Stomach (tissue), 19 donors: ENCODE measurements at regions of chr6 and their contacts with region 1.

Region 1: GRCh38 chr6:29834564-29835436 is 7.2 kb downstream of the HLA-G start:
- DNase-seq: peak; percentile 14 to 38
- H3K4me3 ChIP-seq: no peak overlapping the region
- H3K27ac ChIP-seq: no peak overlapping the region
- H3K4me1 ChIP-seq: peaks cover 0 to 5% (median 0%) of the 10 kb centered on the region in 4 donors
- H3K27me3 ChIP-seq: peaks cover 0 to 78% (median 19%) of the 10 kb centered on the region in 3 donors
- CTCF ChIP-seq: peak in 5 of 7 experiments; percentile 33 to 87 (median 72)
- EP300 ChIP-seq: no peak
- POLR2A ChIP-seq: no peak

Region 2: DNA sequence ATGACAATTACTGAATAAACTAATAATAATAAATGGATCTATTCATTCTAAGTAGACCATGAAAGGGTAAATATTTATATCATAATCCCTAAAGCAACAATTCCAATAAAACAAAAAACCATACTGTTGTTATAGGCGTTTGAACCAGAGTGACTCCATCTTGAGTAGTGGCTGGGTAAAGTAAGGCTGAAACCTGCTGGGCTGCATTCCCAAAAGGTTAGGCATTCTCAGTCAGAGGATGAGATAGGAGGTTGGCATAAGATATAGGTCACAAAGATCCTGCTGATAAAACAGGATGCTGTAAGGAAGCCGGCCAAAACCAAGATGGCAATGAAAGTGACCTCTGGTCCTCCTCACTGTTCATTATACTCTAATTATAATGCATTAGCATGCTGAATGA is 369.5 kb before region 1 on chr6:
- intact Hi-C with region 1: no loop called
- DNase-seq: no peak
- H3K4me3 ChIP-seq: no peak overlapping the region
- H3K27ac ChIP-seq: no peak overlapping the region
- H3K4me1 ChIP-seq: no peaks in the 10 kb centered on the region
- H3K27me3 ChIP-seq: peaks cover 0 to 3% (median 0%) of the 10 kb centered on the region in 3 donors
- CTCF ChIP-seq: no peak
- EP300 ChIP-seq: no peak
- POLR2A ChIP-seq: no peak

Region 3: DNA sequence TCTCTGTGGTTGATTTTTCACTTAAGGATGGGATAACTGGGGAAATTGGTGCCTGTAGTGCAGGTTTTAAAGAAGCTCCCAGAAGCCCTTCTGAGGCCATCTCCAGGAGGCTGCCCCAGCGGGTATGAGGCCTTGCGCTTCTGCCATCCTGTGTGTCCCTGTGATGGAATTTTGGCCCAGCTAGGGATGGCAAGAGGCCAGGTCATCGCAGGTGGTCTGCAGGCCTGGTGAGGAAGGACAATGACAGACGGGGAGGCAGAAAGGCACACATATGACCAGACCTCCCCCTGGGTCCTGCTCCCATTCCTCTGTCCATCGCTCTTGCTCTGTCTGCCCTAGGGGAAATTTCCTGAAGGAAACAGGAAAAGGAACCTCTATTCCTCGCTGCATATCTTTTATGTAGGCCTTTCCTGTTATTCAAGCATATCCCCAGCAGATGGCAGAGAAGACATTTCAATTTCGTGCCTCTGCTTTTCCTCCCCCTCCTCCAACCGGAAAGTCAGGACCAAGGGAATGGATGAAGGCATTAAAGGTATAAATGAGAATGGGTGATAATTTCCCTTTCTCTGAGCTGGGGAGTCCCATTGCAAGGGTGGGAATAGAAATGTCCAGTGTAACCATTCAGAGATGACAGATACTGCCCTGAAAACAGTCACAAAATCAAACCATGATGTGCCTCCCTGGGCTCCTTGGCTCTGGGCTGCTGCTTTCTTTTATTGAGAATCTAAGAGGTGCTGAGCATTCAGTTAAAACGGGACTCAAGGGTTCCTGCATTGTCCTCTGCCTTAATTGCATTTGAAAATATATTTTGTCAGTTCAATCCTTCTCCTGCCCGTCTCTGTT is 129.2 kb before region 1 on chr6:
- intact Hi-C with region 1: loop called (anchors 5 kb)
- DNase-seq: peak in 1 of 2 donors; percentile 77
- H3K4me3 ChIP-seq: no peak overlapping the region
- H3K27ac ChIP-seq: no peak overlapping the region
- H3K4me1 ChIP-seq: peaks cover 0 to 12% (median 0%) of the 10 kb centered on the region in 4 donors
- H3K27me3 ChIP-seq: peaks cover 4 to 59% (median 6%) of the 10 kb centered on the region in 3 donors
- CTCF ChIP-seq: peak in 5 of 7 experiments; percentile 37 to 79 (median 67)
- EP300 ChIP-seq: no peak
- POLR2A ChIP-seq: no peak

Region 4: GRCh38 chr6:29737707-29738630 is 96.8 kb before region 1 on chr6:
- intact Hi-C with region 1: loop called (anchors 10 kb)
- DNase-seq: peak; percentile 71 to 80
- H3K4me3 ChIP-seq: no peak overlapping the region
- H3K27ac ChIP-seq: no peak overlapping the region
- H3K4me1 ChIP-seq: no peaks in the 10 kb centered on the region
- H3K27me3 ChIP-seq: no peaks in the 10 kb centered on the region
- CTCF ChIP-seq: peak in 5 of 7 experiments; percentile 46 to 74 (median 70)
- EP300 ChIP-seq: no peak
- POLR2A ChIP-seq: no peak